Esophagus muscularis mucosa (tissue), 4 donors: ENCODE measurements at regions of chr13 and their contacts with region 1.

Region 1: DNA sequence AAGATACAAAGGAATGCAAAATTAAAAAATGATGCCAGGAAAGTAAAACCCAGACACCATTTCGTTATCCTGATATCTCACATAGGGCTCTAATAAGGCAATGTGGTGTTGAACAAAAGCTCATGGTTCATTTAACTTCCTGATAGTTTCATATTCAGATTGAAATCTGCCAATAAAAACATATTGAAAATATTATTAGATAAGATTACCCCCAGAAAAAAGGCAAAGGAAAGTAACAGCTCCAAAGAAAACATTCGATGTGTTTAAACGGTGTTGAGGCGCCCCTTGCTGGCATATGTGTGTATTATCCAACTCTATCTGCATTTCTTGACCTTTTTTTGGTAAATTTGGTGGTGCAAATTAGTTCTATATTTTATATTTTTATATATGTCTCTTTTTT is 75.9 kb downstream of the ESD start:
- DNase-seq: no peak
- H3K4me3 ChIP-seq: no peak overlapping the region
- H3K27ac ChIP-seq: no peak overlapping the region
- H3K4me1 ChIP-seq: no peaks in the 10 kb centered on the region
- H3K27me3 ChIP-seq: no peaks in the 10 kb centered on the region
- CTCF ChIP-seq: peak; percentile 66 to 74 (median 67)
- EP300 ChIP-seq: no peak
- POLR2A ChIP-seq: no peak

Region 2: GRCh38 chr13:46492946-46493345 is 228.1 kb before region 1 on chr13:
- intact Hi-C with region 1: loop called (anchors 2 kb)
- DNase-seq: no peak
- H3K4me3 ChIP-seq: no peak overlapping the region
- H3K27ac ChIP-seq: no peak overlapping the region
- H3K4me1 ChIP-seq: peaks cover 0 to 16% (median 13%) of the 10 kb centered on the region in 4 donors
- H3K27me3 ChIP-seq: no peaks in the 10 kb centered on the region
- CTCF ChIP-seq: peak; percentile 54 to 63 (median 56)
- EP300 ChIP-seq: no peak
- POLR2A ChIP-seq: no peak

Region 3: GRCh38 chr13:46896341-46897138 is 175.5 kb after region 1 on chr13 and contains the start of gene HTR2A:
- intact Hi-C with region 1: no loop called
- DNase-seq: no peak
- H3K4me3 ChIP-seq: peak within 1 kb of the TSS; percentile 42 to 60 (median 51)
- H3K27ac ChIP-seq: peak within 1 kb of the TSS; percentile 46 to 68 (median 59)
- H3K4me1 ChIP-seq: peaks cover 0 to 45% (median 30%) of the 10 kb centered on the region in 4 donors
- H3K27me3 ChIP-seq: no peaks in the 10 kb centered on the region
- CTCF ChIP-seq: no peak
- EP300 ChIP-seq: no peak
- POLR2A ChIP-seq: no peak
- total RNA-seq, gene HTR2A: under 0.01 to 0.86 (median 0.24) TPM

Region 4: DNA sequence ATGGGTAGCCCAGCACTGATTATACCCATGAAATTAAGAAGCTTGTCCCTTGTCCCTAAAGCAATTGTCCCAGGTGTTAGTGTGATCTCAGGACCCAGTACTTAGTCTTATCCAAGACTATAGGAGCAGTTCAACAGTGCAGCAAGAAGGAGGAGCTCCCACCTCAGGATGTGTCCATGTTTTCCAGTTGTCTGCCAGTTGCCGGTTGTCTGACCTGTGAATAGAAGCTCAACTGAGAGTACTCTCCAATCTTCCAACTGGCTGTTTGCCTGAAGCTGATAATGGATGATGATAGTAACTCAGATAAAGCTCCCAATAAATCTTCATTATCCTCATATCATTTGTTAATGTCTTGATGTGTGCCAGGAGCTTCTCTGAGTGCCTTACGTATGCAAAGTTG is 283.0 kb after region 1 on chr13:
- intact Hi-C with region 1: no loop called
- DNase-seq: no peak
- H3K4me3 ChIP-seq: no peak overlapping the region
- H3K27ac ChIP-seq: no peak overlapping the region
- H3K4me1 ChIP-seq: no peaks in the 10 kb centered on the region
- H3K27me3 ChIP-seq: no peaks in the 10 kb centered on the region
- CTCF ChIP-seq: no peak
- EP300 ChIP-seq: no peak
- POLR2A ChIP-seq: no peak